RWPE1 (cell line): ENCODE measurements at regions of chr11 and their contacts with region 1.

Region 1: DNA sequence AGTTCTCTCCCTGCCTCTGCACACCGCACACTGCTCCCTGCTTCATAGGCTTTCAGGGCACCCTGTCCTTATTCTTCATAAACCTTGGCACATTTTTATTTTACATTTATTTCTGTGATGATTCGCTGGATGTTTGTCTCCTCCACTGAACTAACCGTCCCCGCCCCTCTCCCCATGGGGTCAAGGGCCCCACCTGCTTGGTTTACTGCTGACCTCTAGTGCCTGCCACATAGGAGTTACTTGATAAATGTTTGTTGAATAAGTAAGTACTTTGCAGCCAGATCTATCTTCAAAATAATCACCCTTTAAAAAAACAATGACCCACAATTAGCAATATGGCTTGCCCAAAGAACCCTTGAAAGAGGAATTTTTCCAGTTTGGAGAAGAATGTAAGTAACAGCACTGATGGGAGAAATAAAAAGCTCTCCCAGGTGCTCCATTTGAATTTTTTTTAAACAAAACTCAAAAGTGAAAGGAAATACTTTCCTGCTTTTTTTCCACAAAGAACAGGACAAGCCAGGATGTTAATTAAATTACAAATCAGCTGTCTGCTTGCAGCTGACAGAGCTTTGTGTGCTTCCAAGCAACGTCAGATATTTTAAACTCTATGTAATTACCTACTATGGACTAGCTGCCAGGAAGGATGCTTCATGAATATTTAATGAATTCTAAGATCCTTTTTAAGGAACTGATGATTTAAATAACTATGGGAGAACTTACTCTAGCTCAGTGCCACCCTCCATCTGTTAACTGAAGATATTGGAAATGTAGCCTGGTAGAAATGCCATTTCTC is 1083.6 kb downstream of the DLG2 start:
- DNase-seq: no peak
- H3K27ac ChIP-seq: no peak overlapping the region
- CTCF ChIP-seq: no peak

Region 2: GRCh38 chr11:84339796-84340195 is 203.8 kb before region 1 on chr11:
- CTCF ChIA-PET with region 1: no interaction called
- POLR2A ChIA-PET with region 1: no interaction called
- DNase-seq: no peak
- H3K27ac ChIP-seq: no peak overlapping the region
- CTCF ChIP-seq: no peak

Region 3: DNA sequence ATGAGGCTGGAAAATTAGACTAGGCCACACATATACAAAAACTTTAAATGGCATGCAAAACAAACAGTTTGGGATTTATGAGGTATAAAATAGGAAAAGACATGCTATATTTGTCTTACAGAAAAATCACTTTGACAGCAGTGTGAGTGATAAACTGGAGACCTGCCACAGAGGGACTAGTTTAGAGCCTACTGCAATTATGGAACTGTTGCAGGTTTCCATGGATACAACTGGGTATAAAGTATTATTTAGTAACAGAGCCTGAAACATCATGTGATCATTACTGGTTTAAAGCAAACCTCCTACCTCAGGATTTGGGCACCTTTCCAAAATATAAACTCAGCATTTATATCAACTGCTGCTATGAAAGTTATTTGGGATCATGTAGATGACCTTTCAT is 51.0 kb after region 1 on chr11:
- CTCF ChIA-PET with region 1: no interaction called
- POLR2A ChIA-PET with region 1: interaction called, 10 read pairs
- DNase-seq: no peak
- H3K27ac ChIP-seq: no peak overlapping the region
- CTCF ChIP-seq: no peak